ENCODE measurements at regions of chr21 and their contacts with region 1.

Region 1: GRCh38 chr21:21767276-21767675 is 769.1 kb downstream of the NCAM2 start:
- DNase-seq: no peak
- H3K4me3 ChIP-seq: no peak overlapping the region
- H3K27ac ChIP-seq: no peak overlapping the region
- H3K4me1 ChIP-seq: no peaks in the 10 kb centered on the region
- H3K27me3 ChIP-seq: no peaks in the 10 kb centered on the region
- CTCF ChIP-seq: no peak

Region 2: DNA sequence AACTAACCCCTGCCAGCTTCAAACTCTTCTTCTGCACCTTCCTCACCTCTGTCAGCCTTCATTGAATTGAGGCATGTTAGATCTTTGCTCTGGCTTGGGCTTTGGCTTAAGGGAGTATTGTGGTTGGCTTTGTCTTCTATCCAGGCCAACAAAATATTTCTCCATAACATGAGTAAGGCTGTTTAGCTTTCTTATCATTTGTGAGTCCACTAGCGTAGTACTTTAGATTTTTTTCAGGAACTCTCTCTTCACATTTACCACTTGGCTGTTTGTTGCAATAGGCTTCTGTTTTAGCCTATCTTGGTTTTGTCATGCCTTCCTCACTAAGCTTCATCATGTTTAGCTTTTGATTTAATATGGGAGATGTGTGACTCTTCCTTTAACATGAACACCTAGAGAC is 351.5 kb before region 1 on chr21:
- CTCF ChIA-PET with region 1: no interaction called
- POLR2A ChIA-PET with region 1: no interaction called
- intact Hi-C with region 1: no loop called
- DNase-seq: no peak
- H3K4me3 ChIP-seq: no peak overlapping the region
- H3K27ac ChIP-seq: no peak overlapping the region
- H3K4me1 ChIP-seq: no peaks in the 10 kb centered on the region
- H3K27me3 ChIP-seq: no peaks in the 10 kb centered on the region
- CTCF ChIP-seq: no peak

Region 3: GRCh38 chr21:23401278-23401677 is 1634.0 kb after region 1 on chr21:
- CTCF ChIA-PET with region 1: interaction called, 10 read pairs
- POLR2A ChIA-PET with region 1: no interaction called
- intact Hi-C with region 1: no loop called
- DNase-seq: peak; percentile 45
- H3K4me3 ChIP-seq: no peak overlapping the region
- H3K27ac ChIP-seq: no peak overlapping the region
- H3K4me1 ChIP-seq: no peaks in the 10 kb centered on the region
- H3K27me3 ChIP-seq: no peaks in the 10 kb centered on the region
- CTCF ChIP-seq: peak; percentile 38

Measured in A673 (cell line).